Activated T-helper 1 cell treated with anti-CD3 and anti-CD28 coated beads, Interleukin-12 subunit alpha, Interleukin-12 subunit beta, Interleukin-2, Interleukin-4 antibody, amounts not matched to agents 30 ng/mL and 10 ng/mL and 1 ng/mL, durations not matched to agents 14 hours and 24 hours and 36 hours (primary cell): ENCODE measurements at regions of chr21 and their contacts with region 1.

Region 1: GRCh38 chr21:37563641-37564340 is 197.2 kb downstream of the DYRK1A start:
- DNase-seq: peak; percentile 92
- H3K4me3 Mint-ChIP-seq: peak overlapping the region; percentile 89
- H3K27ac Mint-ChIP-seq: peak overlapping the region; percentile 100
- H3K4me1 Mint-ChIP-seq: peaks cover 39% of the 10 kb centered on the region
- H3K27me3 Mint-ChIP-seq: peaks cover 2% of the 10 kb centered on the region

Region 2: DNA sequence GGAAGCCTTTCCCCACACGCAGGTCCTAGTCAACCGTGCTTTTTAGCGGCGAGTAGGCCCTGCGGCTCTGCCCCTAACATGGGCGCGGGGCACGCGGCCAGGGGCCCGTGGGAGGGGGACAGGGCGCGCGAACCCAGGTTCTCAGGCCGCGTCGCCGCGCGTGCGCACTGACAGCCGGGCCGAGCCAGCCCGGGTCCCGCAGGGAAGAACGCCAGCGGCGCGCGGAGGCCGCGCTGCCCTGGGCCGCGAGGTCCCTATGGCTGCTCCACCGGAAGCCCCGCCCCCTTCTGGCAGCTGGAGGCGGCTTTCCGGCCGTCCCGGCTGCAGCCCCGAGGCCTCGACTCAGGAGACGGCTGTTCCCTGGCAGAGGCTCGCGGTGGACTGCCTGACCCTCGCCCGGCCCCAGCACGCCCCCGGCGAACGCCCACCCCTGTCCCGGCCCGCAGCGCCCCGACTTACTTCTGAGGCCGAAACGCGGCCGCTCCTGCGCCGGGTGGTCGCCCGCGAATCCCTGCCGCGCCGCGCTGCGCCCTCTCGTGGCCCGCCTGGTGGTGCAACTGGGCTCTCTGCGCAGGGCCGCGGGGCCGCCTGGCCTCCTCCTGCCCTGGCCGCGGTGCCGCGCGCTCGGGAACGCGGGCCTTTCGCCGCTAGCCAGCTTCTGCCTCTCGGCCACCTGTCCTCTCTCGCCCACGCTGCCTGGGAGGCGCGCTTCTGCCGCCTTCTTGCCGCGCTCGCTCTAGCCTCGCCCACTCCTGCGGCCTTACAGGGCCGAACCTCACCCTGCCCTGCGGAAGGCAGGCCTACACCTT is 573.9 kb before region 1 on chr21:
- intact Hi-C with region 1: loop called (anchors 5 kb)
- DNase-seq: peak; percentile 87
- H3K4me3 Mint-ChIP-seq: peak overlapping the region; percentile 87
- H3K27ac Mint-ChIP-seq: peak overlapping the region; percentile 96
- H3K4me1 Mint-ChIP-seq: peaks cover 37% of the 10 kb centered on the region
- H3K27me3 Mint-ChIP-seq: no peaks in the 10 kb centered on the region

Region 3: GRCh38 chr21:37257967-37258877 is 305.6 kb before region 1 on chr21:
- intact Hi-C with region 1: loop called (anchors 2 kb)
- DNase-seq: peak; percentile 83
- H3K4me3 Mint-ChIP-seq: peak overlapping the region; percentile 95
- H3K27ac Mint-ChIP-seq: peak overlapping the region; percentile 100
- H3K4me1 Mint-ChIP-seq: peaks cover 56% of the 10 kb centered on the region
- H3K27me3 Mint-ChIP-seq: peaks cover 2% of the 10 kb centered on the region

Region 4: DNA sequence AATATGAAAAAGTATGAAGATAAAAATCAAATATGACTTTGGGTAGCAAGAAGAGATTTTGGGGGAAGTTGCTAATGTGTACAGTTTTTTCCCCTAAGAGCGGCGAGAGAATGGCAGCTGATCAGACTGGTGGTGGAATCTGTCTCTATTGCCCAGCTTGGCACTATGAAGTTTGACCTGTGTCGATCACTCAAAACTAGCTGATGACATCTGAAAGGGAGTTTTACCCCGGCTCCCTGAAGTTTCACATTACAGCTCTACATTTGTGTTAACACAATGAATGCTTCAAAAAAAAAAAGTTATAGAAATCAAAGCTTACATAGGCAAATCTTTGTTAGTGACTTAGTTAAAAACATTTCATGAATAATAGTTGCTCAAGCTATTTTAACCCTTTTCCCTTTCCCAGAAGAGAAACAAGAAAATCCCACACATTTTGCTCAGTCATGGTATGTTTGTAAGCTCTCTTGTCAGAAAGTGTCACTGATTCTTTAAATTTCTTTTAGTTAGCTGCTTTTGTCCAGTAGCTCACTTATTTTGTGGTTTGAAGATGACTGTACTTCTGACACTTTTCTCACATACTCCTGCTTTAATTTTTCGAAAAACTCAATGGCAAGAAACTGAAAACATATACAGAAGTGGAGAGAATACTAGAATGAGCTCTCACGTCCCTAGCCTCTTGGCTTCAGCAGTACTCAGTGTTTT is 155.9 kb before region 1 on chr21:
- intact Hi-C with region 1: loop called (anchors 1 kb)
- DNase-seq: no peak
- H3K4me3 Mint-ChIP-seq: no peak overlapping the region
- H3K27ac Mint-ChIP-seq: peak overlapping the region; percentile 79
- H3K4me1 Mint-ChIP-seq: peaks cover 74% of the 10 kb centered on the region
- H3K27me3 Mint-ChIP-seq: no peaks in the 10 kb centered on the region

Region 5: GRCh38 chr21:37619464-37619974 is 55.7 kb after region 1 on chr21:
- intact Hi-C with region 1: no loop called
- DNase-seq: no peak
- H3K4me3 Mint-ChIP-seq: no peak overlapping the region
- H3K27ac Mint-ChIP-seq: no peak overlapping the region
- H3K4me1 Mint-ChIP-seq: no peaks in the 10 kb centered on the region
- H3K27me3 Mint-ChIP-seq: peaks cover 8% of the 10 kb centered on the region

Region 6: GRCh38 chr21:38244885-38245545 is 681.2 kb after region 1 on chr21:
- intact Hi-C with region 1: loop called (anchors 10 kb)
- DNase-seq: peak; percentile 53
- H3K4me3 Mint-ChIP-seq: peak overlapping the region; percentile 30
- H3K27ac Mint-ChIP-seq: peak overlapping the region; percentile 74
- H3K4me1 Mint-ChIP-seq: peaks cover 39% of the 10 kb centered on the region
- H3K27me3 Mint-ChIP-seq: peaks cover 5% of the 10 kb centered on the region

Region 7: GRCh38 chr21:39183237-39184007 is 1619.6 kb after region 1 on chr21 and contains the start of gene PSMG1:
- intact Hi-C with region 1: loop called (anchors 5 kb)
- DNase-seq: peak; percentile 91
- H3K4me3 Mint-ChIP-seq: peak within 1 kb of the TSS; percentile 98
- H3K27ac Mint-ChIP-seq: peak within 1 kb of the TSS; percentile 98
- H3K4me1 Mint-ChIP-seq: peaks cover 55% of the 10 kb centered on the region
- H3K27me3 Mint-ChIP-seq: no peaks in the 10 kb centered on the region
- total RNA-seq, gene PSMG1: 102 and 103 TPM in 2 replicates